Activated CD4-positive, alpha-beta T cell treated with anti-CD3 and anti-CD28 coated beads for 36 hours (primary cell): ENCODE measurements at regions of chr6 and their contacts with region 1.

Region 1: GRCh38 chr6:32609731-32610640 is 20.3 kb upstream of the HLA-DRB1 start:
- DNase-seq: peak; percentile 60
- ATAC-seq: peak; percentile 98
- H3K4me3 Mint-ChIP-seq: no peak overlapping the region
- H3K27ac Mint-ChIP-seq: no peak overlapping the region
- H3K4me1 Mint-ChIP-seq: peaks cover 16% of the 10 kb centered on the region
- H3K27me3 Mint-ChIP-seq: peaks cover 6% of the 10 kb centered on the region

Region 2: DNA sequence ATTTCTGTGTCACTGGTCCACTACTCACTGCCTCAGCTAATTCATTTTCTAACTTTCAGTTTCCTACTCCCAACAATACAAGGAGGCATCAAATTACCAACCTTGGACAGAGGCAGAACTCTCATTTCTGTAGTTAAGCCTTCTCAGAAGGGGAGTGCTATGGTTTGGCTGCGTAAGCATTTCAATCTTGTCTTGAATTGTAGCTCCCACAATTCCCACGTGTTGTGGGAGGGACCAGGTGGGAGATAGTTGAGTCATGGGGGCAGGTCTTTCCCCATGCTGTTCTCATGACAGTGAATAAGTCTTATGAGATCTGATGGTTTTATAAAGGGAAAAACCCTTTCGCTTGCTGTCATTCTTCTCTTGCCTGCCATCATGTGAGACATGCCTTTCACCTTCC is 147.4 kb before region 1 on chr6:
- CTCF ChIA-PET with region 1: no interaction called
- POLR2A ChIA-PET with region 1: no interaction called
- intact Hi-C with region 1: loop called in 1 of 2 experiments (anchors 1 kb)
- DNase-seq: peak; percentile 82
- ATAC-seq: peak; percentile 98
- H3K4me3 Mint-ChIP-seq: no peak overlapping the region
- H3K27ac Mint-ChIP-seq: peak overlapping the region; percentile 42
- H3K4me1 Mint-ChIP-seq: peaks cover 6% of the 10 kb centered on the region
- H3K27me3 Mint-ChIP-seq: peaks cover 46% of the 10 kb centered on the region

Region 3: GRCh38 chr6:32477808-32478207 is 132.2 kb before region 1 on chr6:
- CTCF ChIA-PET with region 1: no interaction called
- POLR2A ChIA-PET with region 1: no interaction called
- intact Hi-C with region 1: no loop called
- DNase-seq: no peak
- ATAC-seq: no peak
- H3K4me3 Mint-ChIP-seq: no peak overlapping the region
- H3K27ac Mint-ChIP-seq: no peak overlapping the region
- H3K4me1 Mint-ChIP-seq: no peaks in the 10 kb centered on the region
- H3K27me3 Mint-ChIP-seq: peaks cover 15% of the 10 kb centered on the region

Region 4: GRCh38 chr6:32885698-32886286 is 275.8 kb after region 1 on chr6:
- CTCF ChIA-PET with region 1: no interaction called
- POLR2A ChIA-PET with region 1: no interaction called
- intact Hi-C with region 1: no loop called
- DNase-seq: no peak
- ATAC-seq: peak; percentile 55
- H3K4me3 Mint-ChIP-seq: no peak overlapping the region
- H3K27ac Mint-ChIP-seq: no peak overlapping the region
- H3K4me1 Mint-ChIP-seq: peaks cover 10% of the 10 kb centered on the region
- H3K27me3 Mint-ChIP-seq: no peaks in the 10 kb centered on the region